Psoas muscle (tissue), 8 donors: ENCODE measurements at regions of chr16 and their contacts with region 1.

Region 1: GRCh38 chr16:67521095-67521804 is 7.4 kb upstream of the RIPOR1 start:
- DNase-seq: peak; percentile 94 to 96
- ATAC-seq: peak; percentile 94 to 97 (median 96)
- H3K4me3 ChIP-seq: peak overlapping the region; percentile 58
- H3K27ac ChIP-seq: peak overlapping the region; percentile 87
- H3K4me1 ChIP-seq: peaks cover 3% of the 10 kb centered on the region
- H3K27me3 ChIP-seq: no peaks in the 10 kb centered on the region
- CTCF ChIP-seq: peak; percentile 84

Region 2: GRCh38 chr16:66135421-66135831 is 1385.8 kb before region 1 on chr16:
- intact Hi-C with region 1: no loop called
- DNase-seq: peak; percentile 31 to 75
- ATAC-seq: peak; percentile 73 to 96 (median 84)
- H3K4me3 ChIP-seq: no peak overlapping the region
- H3K27ac ChIP-seq: no peak overlapping the region
- H3K4me1 ChIP-seq: peaks cover 9% of the 10 kb centered on the region
- H3K27me3 ChIP-seq: no peaks in the 10 kb centered on the region
- CTCF ChIP-seq: no peak

Region 3: GRCh38 chr16:67561824-67562525 is 40.7 kb after region 1 on chr16:
- intact Hi-C with region 1: loop called in 1 of 2 experiments (anchors 5 kb)
- DNase-seq: peak; percentile 96 to 98
- ATAC-seq: peak; percentile 81 to 90 (median 84)
- H3K4me3 ChIP-seq: peak overlapping the region; percentile 78
- H3K27ac ChIP-seq: peak overlapping the region; percentile 96
- H3K4me1 ChIP-seq: peaks cover 31% of the 10 kb centered on the region
- H3K27me3 ChIP-seq: no peaks in the 10 kb centered on the region
- CTCF ChIP-seq: no peak

Region 4: DNA sequence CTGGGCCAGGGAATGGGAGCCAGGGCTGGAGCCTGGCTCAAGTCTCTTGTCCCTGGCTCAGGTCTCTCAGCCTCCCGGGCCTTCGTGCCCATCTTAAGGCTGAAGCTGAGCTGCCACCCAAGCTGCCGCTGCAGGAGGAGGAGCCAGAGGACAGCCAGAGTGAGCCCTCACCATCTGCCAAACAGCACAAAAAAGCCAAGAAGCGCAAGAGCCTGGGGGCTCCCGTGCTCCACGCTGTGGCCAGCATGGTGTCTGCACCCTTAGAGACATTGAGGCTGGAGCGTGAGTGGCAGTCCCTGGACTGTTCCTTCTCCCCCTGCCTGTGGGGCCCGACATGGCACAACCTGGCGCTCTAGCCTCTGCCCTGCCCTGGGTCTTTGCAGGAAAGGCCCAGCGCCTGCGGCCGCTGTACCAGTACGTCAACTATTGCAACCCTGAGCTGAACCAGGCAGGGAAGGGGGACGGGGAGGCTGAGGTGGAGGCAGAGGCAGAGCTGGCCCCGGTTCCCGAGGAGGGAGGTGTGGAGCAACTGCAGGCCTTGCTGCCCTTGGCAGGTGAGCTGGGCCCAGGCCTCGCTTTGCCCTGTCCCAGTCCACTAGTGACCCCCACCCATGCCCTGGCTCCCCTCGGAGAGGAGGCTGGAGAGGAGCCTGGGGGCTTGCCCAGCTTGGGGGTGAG is 146.7 kb after region 1 on chr16:
- intact Hi-C with region 1: loop called (anchors 2 kb)
- DNase-seq: peak; percentile 87 to 93
- ATAC-seq: peak; percentile 88 to 90 (median 90)
- H3K4me3 ChIP-seq: peak overlapping the region; percentile 88
- H3K27ac ChIP-seq: peak overlapping the region; percentile 90
- H3K4me1 ChIP-seq: peaks cover 17% of the 10 kb centered on the region
- H3K27me3 ChIP-seq: no peaks in the 10 kb centered on the region
- CTCF ChIP-seq: peak; percentile 81

Region 5: DNA sequence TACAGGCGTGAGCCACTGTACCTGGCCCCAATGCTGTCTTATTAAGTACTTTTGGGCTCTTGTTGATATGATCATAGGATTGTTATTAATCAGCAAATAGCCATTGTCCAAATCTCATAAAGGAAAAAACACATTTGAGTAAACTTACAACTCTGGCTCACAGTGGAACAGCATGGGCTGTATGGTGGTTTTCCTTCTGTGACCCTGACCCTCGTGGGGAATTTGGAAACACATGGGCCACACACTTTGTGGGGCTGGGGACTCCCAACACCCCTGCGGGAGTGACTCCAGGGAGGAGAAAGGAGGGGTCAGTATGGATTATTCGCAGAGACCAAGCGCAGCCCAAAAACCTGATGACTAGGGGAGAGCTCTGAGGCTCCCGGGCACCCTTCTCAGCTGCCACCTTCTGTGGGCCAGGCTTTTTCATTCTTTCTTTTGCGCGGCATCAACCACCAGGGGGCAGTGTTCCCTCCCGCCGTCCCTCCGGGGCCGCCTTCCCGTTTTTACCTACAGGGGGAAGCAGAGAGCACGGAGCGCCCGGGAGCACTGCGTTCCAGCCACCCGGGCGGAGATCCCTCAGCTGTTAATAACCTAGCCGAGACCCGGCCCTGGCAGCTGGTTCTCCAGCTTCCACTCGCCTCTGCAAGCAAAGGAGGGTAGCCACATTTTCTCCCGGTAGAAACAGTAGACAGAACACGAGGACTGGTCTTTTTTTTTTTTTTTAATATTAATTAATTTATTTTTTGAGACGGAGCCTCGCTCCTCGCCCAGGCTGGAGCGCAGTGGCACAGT is 295.2 kb after region 1 on chr16:
- intact Hi-C with region 1: loop called in 1 of 2 experiments (anchors 10 kb)
- DNase-seq: peak; percentile 85 to 93
- ATAC-seq: peak; percentile 97 to 100 (median 98)
- H3K4me3 ChIP-seq: no peak overlapping the region
- H3K27ac ChIP-seq: peak overlapping the region; percentile 62
- H3K4me1 ChIP-seq: peaks cover 3% of the 10 kb centered on the region
- H3K27me3 ChIP-seq: no peaks in the 10 kb centered on the region
- CTCF ChIP-seq: peak; percentile 100

Region 6: GRCh38 chr16:67935402-67936123 is 414.3 kb after region 1 on chr16:
- intact Hi-C with region 1: loop called in 1 of 2 experiments (anchors 10 kb)
- DNase-seq: peak; percentile 93 to 96
- ATAC-seq: peak; percentile 89 to 92 (median 92)
- H3K4me3 ChIP-seq: peak overlapping the region; percentile 81
- H3K27ac ChIP-seq: peak overlapping the region; percentile 82
- H3K4me1 ChIP-seq: peaks cover 24% of the 10 kb centered on the region
- H3K27me3 ChIP-seq: no peaks in the 10 kb centered on the region
- CTCF ChIP-seq: no peak